ENCODE measurements at regions of chr2 and their contacts with region 1.

Region 1: DNA sequence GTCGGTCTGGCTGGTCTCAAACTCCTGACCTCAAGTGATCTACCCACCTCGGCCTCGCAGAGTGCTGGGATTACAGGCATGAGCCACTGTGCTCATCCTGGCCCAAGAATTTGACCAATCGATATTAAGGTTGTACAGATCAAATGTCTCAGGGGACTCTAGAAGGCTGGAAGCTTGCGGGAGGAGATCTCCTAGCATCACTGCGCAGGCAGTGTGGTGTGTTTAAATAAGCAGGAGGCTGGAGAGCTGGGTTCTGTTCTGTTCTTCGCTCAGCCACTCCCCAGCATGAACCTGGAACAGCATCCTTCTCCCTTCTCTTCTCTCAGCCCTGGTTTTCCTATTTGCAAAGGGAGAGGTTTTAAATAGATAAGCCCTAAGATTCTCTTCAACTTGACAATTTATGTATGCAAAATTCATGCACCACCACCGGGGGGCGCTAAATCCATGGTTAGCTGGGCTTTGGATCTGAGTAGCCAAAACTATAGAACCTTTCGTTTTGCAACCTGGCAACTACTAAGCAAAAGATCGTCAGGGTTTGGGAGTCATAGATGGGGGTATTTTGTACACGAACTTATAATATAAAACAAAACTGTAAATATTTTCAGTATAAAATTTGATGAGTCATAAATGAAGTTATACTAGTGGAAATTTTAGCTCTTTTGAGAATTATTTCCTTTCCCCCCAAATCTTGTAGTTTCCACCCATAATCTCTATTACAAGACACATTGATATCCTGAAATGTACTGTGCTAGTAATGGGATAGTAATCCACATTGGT is 60.6 kb downstream of the SLC16A14 start:
- DNase-seq: peak in 1 of 2 donors; percentile 76
- H3K4me3 ChIP-seq: peak overlapping the region in 1 of 2 donors; percentile 10
- H3K27ac ChIP-seq: no peak overlapping the region
- H3K4me1 ChIP-seq: no peaks in the 10 kb centered on the region
- H3K27me3 ChIP-seq: no peaks in the 10 kb centered on the region
- CTCF ChIP-seq: peak; percentile 41 to 67 (median 64)

Region 2: DNA sequence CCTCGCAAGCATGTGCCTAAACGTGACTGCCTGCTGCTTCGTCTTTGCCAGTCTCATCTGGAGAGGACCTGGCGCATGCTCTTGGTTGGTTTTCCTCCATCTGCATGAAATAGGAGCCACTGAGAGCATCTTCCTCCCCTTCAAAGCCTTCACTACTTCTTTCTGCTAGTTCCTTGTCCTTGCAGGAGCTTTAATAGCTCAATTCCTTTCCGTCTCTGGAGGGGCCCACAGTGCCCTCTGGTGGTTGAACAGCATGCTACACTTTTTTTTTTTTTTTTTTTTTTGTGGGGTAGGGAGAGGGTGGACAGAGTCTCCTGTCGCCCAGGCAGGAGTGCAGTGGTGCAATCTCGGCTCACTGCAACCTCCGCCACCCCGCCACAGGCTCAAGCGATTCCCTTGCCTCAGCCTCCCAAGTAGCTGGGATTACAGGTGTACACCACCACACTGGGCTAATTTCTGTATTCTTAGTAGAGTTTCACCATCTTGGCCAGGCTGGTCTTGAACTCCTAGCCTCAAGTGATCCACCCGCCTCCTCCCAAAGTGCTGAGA is 152.1 kb after region 1 on chr2:
- intact Hi-C with region 1: loop called (anchors 5 kb)
- DNase-seq: no peak
- H3K4me3 ChIP-seq: no peak overlapping the region
- H3K27ac ChIP-seq: no peak overlapping the region
- H3K4me1 ChIP-seq: no peaks in the 10 kb centered on the region
- H3K27me3 ChIP-seq: no peaks in the 10 kb centered on the region
- CTCF ChIP-seq: peak; percentile 44 to 70 (median 47)